Uterus (tissue), 4 donors: ENCODE measurements at regions of chr15 and their contacts with region 1.

Region 1: DNA sequence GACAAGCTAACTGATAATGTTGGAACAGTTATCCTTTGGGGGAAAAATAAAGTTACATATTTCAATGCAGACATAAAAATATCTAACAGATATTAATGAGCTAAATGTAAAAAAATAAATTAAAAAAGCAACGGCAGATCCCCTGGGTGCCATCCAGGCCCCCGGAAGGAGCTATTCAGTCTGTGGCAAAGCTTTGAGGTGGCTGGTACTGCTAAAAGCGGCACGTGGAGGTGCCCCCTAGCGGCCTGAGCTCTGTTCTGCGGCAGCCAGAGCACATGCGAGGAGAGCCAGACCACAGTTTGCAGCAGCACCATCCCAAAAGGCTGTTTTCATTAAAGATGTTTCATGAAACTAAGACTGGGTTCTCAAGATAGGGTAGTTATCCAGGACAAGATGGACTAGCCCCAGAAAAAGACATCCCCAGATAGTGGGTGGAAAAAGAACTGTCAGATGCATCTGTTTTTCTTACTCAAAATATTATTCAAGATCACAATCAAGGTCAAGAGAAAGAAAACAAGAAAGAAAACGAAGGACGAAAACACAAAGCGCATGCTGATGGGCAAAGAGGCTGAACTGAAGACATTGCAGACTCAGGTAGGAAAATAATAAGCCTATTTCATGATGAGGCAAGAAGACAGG is 18.7 kb downstream of the AP3S2 start:
- DNase-seq: peak; percentile 62 to 73
- H3K4me3 ChIP-seq: no peak overlapping the region
- H3K27ac ChIP-seq: no peak overlapping the region
- H3K4me1 ChIP-seq: no peaks in the 10 kb centered on the region
- H3K27me3 ChIP-seq: no peaks in the 10 kb centered on the region
- CTCF ChIP-seq: peak; percentile 80 to 92 (median 80)
- POLR2A ChIP-seq: no peak

Region 2: GRCh38 chr15:89754361-89755140 is 120.5 kb before region 1 on chr15:
- intact Hi-C with region 1: loop called (anchors 5 kb)
- DNase-seq: no peak
- H3K4me3 ChIP-seq: no peak overlapping the region
- H3K27ac ChIP-seq: no peak overlapping the region
- H3K4me1 ChIP-seq: peaks cover 0 to 7% of the 10 kb centered on the region in 2 donors
- H3K27me3 ChIP-seq: no peaks in the 10 kb centered on the region
- CTCF ChIP-seq: no peak
- POLR2A ChIP-seq: no peak